ENCODE measurements at regions of chr9 and their contacts with region 1.

Region 1: DNA sequence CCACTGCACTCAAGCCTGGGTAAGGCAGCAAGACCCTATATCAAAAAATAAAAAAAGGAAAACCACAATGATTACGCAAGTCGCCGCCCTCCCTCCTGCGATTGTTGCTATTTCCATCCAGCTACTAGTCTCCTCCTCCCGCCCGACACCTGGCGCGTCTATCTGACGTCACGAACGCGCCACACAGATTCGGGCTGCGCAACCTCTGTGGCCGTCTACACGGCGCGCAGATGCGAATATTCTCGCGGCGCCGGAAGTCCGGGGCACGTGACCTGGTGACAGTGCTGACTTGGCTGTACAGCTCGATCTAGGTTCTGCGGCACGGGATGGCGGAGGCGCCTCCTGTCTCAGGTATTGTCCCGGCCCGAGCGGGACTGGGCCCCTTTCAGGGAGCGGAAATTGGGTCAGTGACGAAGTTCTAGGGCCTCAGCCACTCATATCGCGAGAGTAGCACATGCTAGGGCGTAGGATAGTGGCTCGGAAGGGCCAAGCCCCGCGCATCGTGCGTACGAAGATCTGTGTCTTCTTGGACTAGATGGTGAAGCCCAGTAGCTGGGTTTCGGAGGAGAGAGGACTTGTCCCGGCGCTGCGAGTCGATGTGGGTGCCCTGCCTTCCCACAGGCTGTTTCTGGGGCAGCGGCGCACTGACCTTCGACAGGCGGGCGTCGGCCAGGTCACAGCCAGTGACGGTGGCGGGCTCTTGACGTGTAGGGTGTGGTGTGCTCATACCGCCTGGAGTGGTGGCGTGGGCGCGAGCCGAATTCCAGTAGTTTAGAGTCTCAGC is at the start of gene NFX1:
- DNase-seq: peak; percentile 98
- H3K4me3 Mint-ChIP-seq: peak within 1 kb of the TSS; percentile 93
- H3K27ac Mint-ChIP-seq: peak within 1 kb of the TSS; percentile 100
- H3K4me1 Mint-ChIP-seq: peaks cover 54% of the 10 kb centered on the region
- H3K27me3 Mint-ChIP-seq: no peaks in the 10 kb centered on the region
- total RNA-seq, gene NFX1: 36.2 and 37.6 TPM in 2 replicates

Region 2: GRCh38 chr9:33076358-33077004 is 214.0 kb before region 1 on chr9 and contains the start of gene SMU1:
- intact Hi-C with region 1: loop called (anchors 1 kb)
- DNase-seq: peak; percentile 96
- H3K4me3 Mint-ChIP-seq: peak within 1 kb of the TSS; percentile 99
- H3K27ac Mint-ChIP-seq: peak within 1 kb of the TSS; percentile 96
- H3K4me1 Mint-ChIP-seq: peaks cover 37% of the 10 kb centered on the region
- H3K27me3 Mint-ChIP-seq: peaks cover 2% of the 10 kb centered on the region
- total RNA-seq, gene SMU1: 28.8 TPM in 2 replicates

Region 3: DNA sequence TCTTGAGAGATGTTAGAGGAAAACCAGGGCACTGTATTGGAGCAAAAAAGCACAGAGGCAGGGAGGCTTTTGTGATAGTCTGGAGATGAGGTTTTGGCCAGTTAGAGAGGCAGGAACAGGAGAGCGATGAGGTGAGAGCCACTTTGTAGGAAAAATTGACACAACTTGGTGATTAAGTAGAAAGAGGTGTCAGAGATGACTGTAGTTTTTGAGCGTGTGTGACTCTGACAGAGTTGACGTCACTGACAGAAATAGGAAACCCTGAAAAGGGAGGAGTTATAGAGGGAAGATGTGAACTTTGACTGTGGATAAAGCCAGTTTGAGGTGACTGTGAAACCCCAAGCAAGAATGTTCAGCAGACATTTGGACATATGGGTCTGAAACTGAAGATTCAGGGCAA is 15.6 kb after region 1 on chr9:
- intact Hi-C with region 1: loop called (anchors 1 kb)
- DNase-seq: peak; percentile 42
- H3K4me3 Mint-ChIP-seq: no peak overlapping the region
- H3K27ac Mint-ChIP-seq: no peak overlapping the region
- H3K4me1 Mint-ChIP-seq: peaks cover 9% of the 10 kb centered on the region
- H3K27me3 Mint-ChIP-seq: no peaks in the 10 kb centered on the region

Region 4: GRCh38 chr9:33415501-33416038 is 125.1 kb after region 1 on chr9:
- intact Hi-C with region 1: loop called (anchors 2 kb)
- DNase-seq: peak; percentile 91
- H3K4me3 Mint-ChIP-seq: peak overlapping the region; percentile 76
- H3K27ac Mint-ChIP-seq: peak overlapping the region; percentile 95
- H3K4me1 Mint-ChIP-seq: peaks cover 53% of the 10 kb centered on the region
- H3K27me3 Mint-ChIP-seq: peaks cover under 1% of the 10 kb centered on the region

Region 5: DNA sequence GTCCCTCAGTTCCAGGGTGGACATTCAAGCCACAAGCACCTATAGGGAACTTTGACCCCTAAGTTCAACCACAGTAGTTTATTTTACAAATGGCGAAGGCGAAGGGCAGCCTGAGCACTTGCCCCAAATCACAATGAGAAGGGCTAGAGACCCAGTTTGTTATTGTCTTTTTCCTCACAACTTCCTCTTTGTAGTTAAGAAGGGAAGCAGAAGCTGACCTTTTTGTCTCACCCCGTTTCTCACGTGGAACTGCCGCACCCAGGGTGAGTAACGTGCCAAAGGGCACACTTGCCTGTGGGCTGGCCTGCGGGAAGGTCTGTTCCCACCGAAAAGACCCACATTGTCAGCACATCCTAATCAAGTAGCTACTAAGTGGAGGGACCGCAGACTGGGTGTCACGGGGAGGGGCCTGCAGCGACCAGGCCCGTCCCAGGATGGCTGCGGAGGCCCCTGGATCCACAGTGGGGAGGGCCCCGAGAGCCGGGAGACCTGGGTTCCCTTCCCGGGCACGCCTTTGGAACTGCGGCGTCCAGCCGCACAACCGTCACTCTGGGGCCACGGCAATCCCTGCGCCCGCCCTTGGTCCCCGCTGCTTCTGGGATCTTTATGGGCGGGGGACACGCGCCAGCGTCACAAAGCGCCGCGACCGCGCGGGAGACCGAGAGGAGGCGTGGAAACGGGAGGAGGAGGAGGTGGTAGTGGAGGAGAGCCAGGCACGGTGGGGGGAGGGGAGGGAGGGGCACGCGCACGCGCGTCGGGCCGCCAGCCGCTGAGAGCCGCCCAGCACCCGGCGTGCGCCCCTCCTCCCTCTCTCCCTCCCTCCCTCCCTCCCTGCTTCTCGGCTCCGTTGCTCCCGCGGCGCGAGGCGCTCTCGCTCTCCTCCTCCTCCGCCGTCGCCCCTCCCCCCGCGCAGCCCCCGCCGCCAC is 526.2 kb after region 1 on chr9 and contains the start of gene UBE2R2:
- intact Hi-C with region 1: loop called (anchors 5 kb)
- DNase-seq: peak; percentile 90
- H3K4me3 Mint-ChIP-seq: peak within 1 kb of the TSS; percentile 93
- H3K27ac Mint-ChIP-seq: peak within 1 kb of the TSS; percentile 98
- H3K4me1 Mint-ChIP-seq: peaks cover 56% of the 10 kb centered on the region
- H3K27me3 Mint-ChIP-seq: peaks cover 5% of the 10 kb centered on the region
- total RNA-seq, gene UBE2R2: 40.0 and 41.0 TPM in 2 replicates